ENCODE measurements at regions of chr1 and their contacts with region 1.

Region 1: DNA sequence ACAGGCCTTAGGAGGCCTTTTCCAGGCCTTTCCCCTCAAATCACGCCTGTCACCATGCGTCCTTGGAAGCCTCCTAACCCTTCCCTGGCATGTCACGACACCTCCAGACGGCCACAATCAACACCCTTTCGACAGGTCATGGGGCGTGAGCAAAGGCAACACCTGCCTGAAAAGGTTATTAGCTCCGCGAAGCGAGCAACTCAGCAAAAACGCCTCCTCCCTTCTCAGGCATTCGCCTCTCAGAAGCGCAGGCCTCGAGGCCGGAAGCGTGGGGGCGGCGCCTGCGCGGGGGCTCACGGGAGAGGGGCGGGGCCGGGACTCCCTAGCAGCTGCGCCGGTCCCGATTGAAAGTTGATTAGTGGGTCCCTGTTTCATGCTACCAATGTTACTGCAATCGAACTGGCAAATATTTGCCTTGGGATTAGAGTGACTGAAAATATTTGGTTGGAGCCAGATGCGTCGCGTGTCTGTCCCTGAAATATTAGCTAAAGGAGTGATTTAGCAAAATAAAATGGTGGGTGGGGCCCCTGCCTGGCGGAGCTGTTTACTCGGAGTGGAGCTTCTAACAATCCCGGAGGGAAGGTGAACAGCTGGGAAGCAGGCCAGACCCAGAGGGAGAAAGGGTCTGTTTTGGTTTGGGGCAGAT is 44.9 kb downstream of the GFI1 start:
- DNase-seq: peak; percentile 88 to 90
- H3K4me3 ChIP-seq: peak overlapping the region; percentile 43
- H3K4me3 Mint-ChIP-seq: peak overlapping the region; percentile 85
- H3K27ac Mint-ChIP-seq: peak overlapping the region; percentile 94
- H3K4me1 ChIP-seq: peaks cover 25% of the 10 kb centered on the region
- H3K4me1 Mint-ChIP-seq: peaks cover 19% of the 10 kb centered on the region
- H3K27me3 ChIP-seq: no peaks in the 10 kb centered on the region
- H3K27me3 Mint-ChIP-seq: no peaks in the 10 kb centered on the region
- CTCF ChIP-seq: no peak

Region 2: DNA sequence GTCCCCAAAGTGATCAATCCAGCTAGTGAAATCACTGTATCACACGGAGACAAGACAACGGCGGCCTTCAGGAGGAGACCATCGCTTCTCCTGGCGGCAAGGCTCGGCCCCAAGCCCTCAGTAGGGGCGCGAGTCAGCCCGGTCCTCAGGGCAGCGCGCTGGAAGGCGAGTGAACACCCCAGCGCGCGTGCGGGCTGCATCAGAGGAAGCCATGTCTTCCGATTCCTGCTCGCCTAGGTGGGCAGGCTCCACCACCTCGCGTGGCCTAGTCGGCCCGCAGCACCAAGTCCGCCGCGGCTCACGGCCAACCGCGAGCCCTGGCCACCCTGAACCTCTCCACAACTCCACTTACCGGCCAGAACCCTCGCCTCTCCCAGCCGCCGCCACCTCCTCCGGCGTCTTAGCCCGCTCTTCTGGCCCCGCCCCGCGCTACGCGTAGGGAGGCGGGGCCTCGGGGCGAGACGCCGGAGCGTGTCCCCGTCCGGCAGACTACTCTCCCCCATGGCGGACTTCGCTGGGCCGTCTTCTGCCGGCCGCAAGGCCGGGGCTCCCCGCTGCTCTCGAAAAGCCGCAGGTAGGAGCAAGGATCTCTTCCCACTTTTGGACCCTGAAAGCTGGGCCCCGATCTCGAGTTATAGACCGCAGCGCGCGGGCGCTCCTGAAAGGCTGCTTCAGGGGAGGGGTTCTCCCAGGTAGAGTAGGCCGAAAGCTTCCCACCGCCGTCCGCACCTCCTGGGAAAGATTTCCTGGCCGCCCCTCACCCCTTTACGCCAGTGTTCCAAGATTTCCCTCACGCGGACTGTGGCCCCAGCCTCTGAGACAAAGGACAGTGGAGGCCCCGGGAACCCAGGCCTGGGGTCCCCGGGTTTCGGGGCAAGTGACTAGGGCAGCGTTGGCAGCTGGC is 143.0 kb before region 1 on chr1 and contains the starts of genes GLMN and RPAP2:
- CTCF ChIA-PET with region 1: no interaction called
- POLR2A ChIA-PET with region 1: interaction called, 7 read pairs
- intact Hi-C with region 1: loop called (anchors 5 kb)
- DNase-seq: peak; percentile 72 to 78
- H3K4me3 ChIP-seq: peak within 1 kb of the TSS; percentile 53
- H3K4me3 Mint-ChIP-seq: peak within 1 kb of the TSS; percentile 95
- H3K27ac Mint-ChIP-seq: peak within 1 kb of the TSS; percentile 92
- H3K4me1 ChIP-seq: no peaks in the 10 kb centered on the region; the same call in 1 of the 2 replicates
- H3K4me1 Mint-ChIP-seq: peaks cover 6% of the 10 kb centered on the region
- H3K27me3 ChIP-seq: no peaks in the 10 kb centered on the region
- H3K27me3 Mint-ChIP-seq: no peaks in the 10 kb centered on the region
- CTCF ChIP-seq: no peak
- total RNA-seq, gene GLMN: 12.3 and 12.9 TPM in 2 replicates
- total RNA-seq, gene RPAP2: 15.5 and 16.8 TPM in 2 replicates

Region 3: DNA sequence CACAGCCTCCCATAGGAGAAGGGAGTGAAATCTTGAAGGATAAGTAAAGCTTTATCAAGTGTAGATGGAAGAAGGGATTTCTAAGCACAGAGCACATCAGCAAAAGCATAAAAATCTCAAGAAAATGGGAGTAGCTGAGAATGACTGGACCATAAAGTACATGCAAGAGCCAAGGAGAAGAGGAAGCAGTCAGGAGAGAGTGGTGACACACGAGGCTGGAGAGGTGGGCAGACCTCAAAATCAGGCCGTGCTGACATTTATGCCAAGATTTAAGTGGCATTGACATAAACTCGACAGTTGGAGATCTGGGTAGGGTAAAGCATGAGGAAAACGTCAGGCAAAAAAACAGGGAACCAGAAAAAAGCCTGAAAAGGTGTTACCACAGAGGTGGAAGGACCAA is 17.4 kb before region 1 on chr1:
- CTCF ChIA-PET with region 1: no interaction called
- POLR2A ChIA-PET with region 1: interaction called, 14 read pairs
- intact Hi-C with region 1: no loop called
- DNase-seq: no peak
- H3K4me3 ChIP-seq: no peak overlapping the region
- H3K4me3 Mint-ChIP-seq: no peak overlapping the region
- H3K27ac Mint-ChIP-seq: no peak overlapping the region
- H3K4me1 ChIP-seq: no peaks in the 10 kb centered on the region
- H3K4me1 Mint-ChIP-seq: no peaks in the 10 kb centered on the region
- H3K27me3 ChIP-seq: no peaks in the 10 kb centered on the region
- H3K27me3 Mint-ChIP-seq: no peaks in the 10 kb centered on the region
- CTCF ChIP-seq: no peak

Region 4: DNA sequence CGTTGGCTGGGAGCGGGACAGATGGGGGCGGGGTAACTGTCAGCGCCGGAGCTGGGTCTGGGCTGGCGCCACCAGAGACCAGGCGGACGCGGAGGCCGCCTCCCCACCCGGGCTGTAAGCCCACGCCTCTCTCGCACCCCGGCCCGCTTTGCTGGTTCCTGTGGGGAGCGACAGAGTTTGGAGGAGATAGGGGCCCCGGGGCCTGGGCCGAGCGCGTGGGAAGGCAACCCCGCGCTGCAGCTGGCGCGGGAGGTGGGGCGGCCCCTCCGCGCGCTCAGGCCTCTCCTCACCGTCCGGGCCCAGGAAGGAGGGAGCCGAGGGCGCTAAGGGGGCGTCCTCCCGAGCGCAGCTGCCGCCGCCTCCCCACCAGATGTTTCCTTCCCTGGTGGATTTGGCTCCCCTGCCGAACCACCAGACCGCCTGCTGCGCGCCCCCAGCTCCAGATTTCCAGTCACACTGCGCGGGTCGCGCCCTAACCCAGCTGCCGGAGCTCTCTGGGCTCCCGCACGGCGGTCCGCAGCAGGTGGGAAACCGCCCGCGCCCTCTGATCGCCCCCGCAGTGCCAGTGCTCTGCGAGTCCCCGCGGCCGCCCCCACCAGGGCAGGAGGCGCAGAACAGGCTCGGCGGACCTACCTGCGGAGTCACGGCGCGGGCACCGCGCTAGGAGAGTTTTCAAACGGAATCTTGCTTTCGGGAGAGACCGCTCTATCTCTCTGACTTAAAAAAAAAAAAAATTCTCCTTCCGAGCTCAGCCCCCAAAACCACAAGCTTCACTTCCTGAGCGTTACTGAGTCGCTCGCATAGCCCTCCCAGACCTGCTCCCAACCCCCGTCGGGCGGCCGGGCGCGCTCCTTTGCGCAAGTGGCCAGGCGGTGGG is 43.8 kb after region 1 on chr1:
- CTCF ChIA-PET with region 1: interaction called, 3 read pairs
- POLR2A ChIA-PET with region 1: no interaction called
- intact Hi-C with region 1: loop called (anchors 5 kb)
- DNase-seq: peak; percentile 68 to 79
- H3K4me3 ChIP-seq: peak overlapping the region; percentile 50
- H3K4me3 Mint-ChIP-seq: peak overlapping the region; percentile 91
- H3K27ac Mint-ChIP-seq: no peak overlapping the region
- H3K4me1 ChIP-seq: no peaks in the 10 kb centered on the region
- H3K4me1 Mint-ChIP-seq: no peaks in the 10 kb centered on the region
- H3K27me3 ChIP-seq: no peaks in the 10 kb centered on the region; the same call in 1 of the 2 replicates
- H3K27me3 Mint-ChIP-seq: no peaks in the 10 kb centered on the region
- CTCF ChIP-seq: peak in 1 of 2 experiments; percentile 45

Region 5: GRCh38 chr1:92599184-92599583 is 157.4 kb after region 1 on chr1:
- CTCF ChIA-PET with region 1: no interaction called
- POLR2A ChIA-PET with region 1: no interaction called
- intact Hi-C with region 1: no loop called
- DNase-seq: no peak
- H3K4me3 ChIP-seq: no peak overlapping the region
- H3K4me3 Mint-ChIP-seq: no peak overlapping the region
- H3K27ac Mint-ChIP-seq: peak overlapping the region; percentile 8
- H3K4me1 ChIP-seq: no peaks in the 10 kb centered on the region
- H3K4me1 Mint-ChIP-seq: no peaks in the 10 kb centered on the region
- H3K27me3 ChIP-seq: no peaks in the 10 kb centered on the region
- H3K27me3 Mint-ChIP-seq: no peaks in the 10 kb centered on the region
- CTCF ChIP-seq: peak; percentile 13 to 19